CD8-positive, alpha-beta memory T cell (primary cell): ENCODE measurements at regions of chr11 and their contacts with region 1.

Region 1: GRCh38 chr11:62025487-62026105 is 58.2 kb upstream of the FTH1 start:
- DNase-seq: peak; percentile 64 to 93 (median 91)
- H3K4me3 ChIP-seq: peak overlapping the region; percentile 26
- H3K4me3 Mint-ChIP-seq: peak overlapping the region; percentile 9 to 83 (median 74)
- H3K27ac ChIP-seq: peak overlapping the region; percentile 78
- H3K27ac Mint-ChIP-seq: peak overlapping the region; percentile 92 to 100 (median 99)
- H3K4me1 ChIP-seq: peaks cover 20% of the 10 kb centered on the region
- H3K4me1 Mint-ChIP-seq: peaks cover 18 to 25% (median 24%) of the 10 kb centered on the region in 3 donors
- H3K27me3 ChIP-seq: no peaks in the 10 kb centered on the region
- H3K27me3 Mint-ChIP-seq: peaks cover 5 to 6% of the 10 kb centered on the region in 2 donors

Region 2: GRCh38 chr11:61967116-61967923 is 58.3 kb before region 1 on chr11 and contains the start of gene FTH1:
- CTCF ChIA-PET with region 1: interaction called, 5 read pairs
- POLR2A ChIA-PET with region 1: interaction called, 38 read pairs
- DNase-seq: peak; percentile 83 to 95 (median 90)
- H3K4me3 ChIP-seq: peak within 1 kb of the TSS; percentile 98
- H3K4me3 Mint-ChIP-seq: peak within 1 kb of the TSS; percentile 95 to 100 (median 95)
- H3K27ac ChIP-seq: peak within 1 kb of the TSS; percentile 94
- H3K27ac Mint-ChIP-seq: peak within 1 kb of the TSS; percentile 96 to 100 (median 98)
- H3K4me1 ChIP-seq: peaks cover 42% of the 10 kb centered on the region
- H3K4me1 Mint-ChIP-seq: peaks cover 55 to 72% (median 60%) of the 10 kb centered on the region in 3 donors
- H3K27me3 ChIP-seq: no peaks in the 10 kb centered on the region
- H3K27me3 Mint-ChIP-seq: peaks cover 0 to 9% of the 10 kb centered on the region in 2 donors
- total RNA-seq, gene FTH1: 490 to 506 TPM